Activated B cell treated with CpG ODN at 0.5 μM for 24 hours (primary cell): ENCODE measurements at regions of chr12 and their contacts with region 1.

Region 1: DNA sequence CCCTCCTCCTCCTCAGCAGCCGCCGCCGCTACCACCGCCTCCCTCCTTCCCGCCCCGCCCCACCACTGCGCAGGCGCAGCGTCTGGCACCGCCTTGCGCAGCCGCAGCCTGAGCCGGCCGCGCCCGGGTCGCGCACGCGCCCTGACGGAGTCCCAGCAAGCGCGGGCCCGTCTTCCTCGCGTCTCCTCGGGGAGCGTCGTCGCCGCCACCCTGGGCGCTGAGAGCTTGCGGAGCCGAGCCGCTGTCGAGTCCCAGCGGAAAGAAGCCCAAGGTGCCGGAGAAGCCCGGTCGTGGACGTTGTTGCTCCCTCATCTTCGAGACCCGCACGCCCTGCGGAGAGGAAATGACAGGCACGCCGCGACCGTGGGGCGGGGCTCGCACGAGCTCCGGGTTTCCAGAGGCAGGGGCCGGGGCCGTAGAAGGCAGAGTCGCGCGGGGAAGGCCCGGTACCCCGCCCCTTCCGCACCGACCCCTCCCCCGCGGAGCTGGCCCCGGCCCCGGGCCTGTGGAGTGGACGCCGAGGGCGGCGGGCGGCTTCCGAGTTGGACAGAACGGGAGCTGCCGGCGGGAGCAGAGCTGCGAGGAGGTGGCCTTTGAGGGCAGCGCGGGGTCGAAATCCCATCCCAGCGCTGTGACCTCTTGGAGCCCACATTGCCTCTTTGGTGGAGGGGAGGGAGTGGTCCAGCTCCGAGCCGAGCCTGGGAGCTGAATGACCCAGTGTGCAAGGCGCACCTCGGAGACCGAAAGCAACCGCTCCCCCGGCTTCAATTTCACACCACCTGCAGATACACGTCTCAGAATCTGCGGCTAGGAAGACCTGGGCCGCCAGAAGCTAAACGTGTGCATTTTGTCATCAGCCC is 469 bp upstream of the RAB35 start:
- DNase-seq: peak; percentile 99
- ATAC-seq: peak; percentile 76
- H3K4me3 Mint-ChIP-seq: peak overlapping the region; percentile 78
- H3K27ac Mint-ChIP-seq: peak overlapping the region; percentile 83
- H3K4me1 Mint-ChIP-seq: peaks cover 76% of the 10 kb centered on the region
- H3K27me3 Mint-ChIP-seq: no peaks in the 10 kb centered on the region
- CTCF ChIP-seq: no peak

Region 2: DNA sequence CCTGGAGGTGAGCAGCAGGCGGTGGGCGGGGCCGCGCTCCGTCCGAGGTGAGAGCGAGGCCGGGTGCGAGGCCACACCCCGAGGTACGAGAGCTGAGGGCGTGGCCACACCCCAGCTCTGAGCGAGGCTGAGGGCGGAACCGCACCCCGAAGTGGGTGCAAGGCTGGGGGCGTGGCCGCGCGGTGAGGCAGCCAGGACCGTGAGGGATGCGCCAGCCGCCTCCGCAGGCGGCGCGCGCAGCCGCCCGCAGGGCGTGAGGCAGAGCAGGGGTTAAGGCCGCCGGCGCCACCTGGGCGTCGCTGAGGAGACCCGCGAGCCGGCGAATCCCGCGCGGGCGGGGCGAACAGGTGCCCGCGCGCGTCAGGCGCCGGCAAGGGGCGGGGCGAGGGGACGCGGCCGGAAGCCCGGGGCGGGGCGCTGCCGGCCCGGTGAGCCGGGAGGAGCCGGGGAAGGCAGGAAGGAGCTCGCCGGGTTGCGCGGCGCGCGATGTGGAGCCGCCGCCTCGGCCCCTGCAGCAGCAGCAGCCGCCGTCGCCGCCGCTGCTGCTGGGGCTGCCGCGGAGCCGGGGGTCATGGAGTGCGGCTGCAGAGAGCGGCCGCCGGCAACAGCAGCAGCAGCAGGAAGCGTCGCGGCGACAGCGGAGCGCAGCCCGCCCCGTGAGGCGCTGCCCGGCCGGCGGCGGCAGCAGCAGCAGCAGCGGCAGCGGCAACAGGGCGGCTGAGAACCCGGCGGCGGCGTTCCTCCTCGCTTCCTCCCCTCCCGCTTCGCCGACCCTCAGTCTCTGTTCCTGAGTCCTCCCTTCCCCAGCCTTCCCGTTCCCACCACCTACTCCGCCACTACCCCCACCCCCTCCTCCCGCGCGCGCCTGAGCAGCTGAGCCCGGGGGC is 128.0 kb before region 1 on chr12 and contains the start of gene BICDL1:
- CTCF ChIA-PET with region 1: no interaction called
- POLR2A ChIA-PET with region 1: interaction called, 14 read pairs
- intact Hi-C with region 1: no loop called
- DNase-seq: peak; percentile 96
- ATAC-seq: peak; percentile 83
- H3K4me3 Mint-ChIP-seq: peak within 1 kb of the TSS; percentile 83
- H3K27ac Mint-ChIP-seq: peak within 1 kb of the TSS; percentile 85
- H3K4me1 Mint-ChIP-seq: peaks cover 23% of the 10 kb centered on the region
- H3K27me3 Mint-ChIP-seq: no peaks in the 10 kb centered on the region
- CTCF ChIP-seq: no peak
- total RNA-seq, gene BICDL1: 15.1 and 16.8 TPM in 2 replicates

Region 3: GRCh38 chr12:120132863-120133385 is 15.9 kb after region 1 on chr12:
- CTCF ChIA-PET with region 1: interaction called, 6 read pairs
- POLR2A ChIA-PET with region 1: interaction called, 21 read pairs
- intact Hi-C with region 1: loop called (anchors 1 kb)
- DNase-seq: peak; percentile 22
- ATAC-seq: peak; percentile 81
- H3K4me3 Mint-ChIP-seq: peak overlapping the region; percentile 33
- H3K27ac Mint-ChIP-seq: peak overlapping the region; percentile 80
- H3K4me1 Mint-ChIP-seq: peaks cover 28% of the 10 kb centered on the region
- H3K27me3 Mint-ChIP-seq: no peaks in the 10 kb centered on the region
- CTCF ChIP-seq: no peak

Region 4: GRCh38 chr12:120194534-120195395 is 77.7 kb after region 1 on chr12 and contains the start of gene GCN1:
- CTCF ChIA-PET with region 1: no interaction called
- POLR2A ChIA-PET with region 1: interaction called, 91 read pairs
- intact Hi-C with region 1: no loop called
- DNase-seq: peak; percentile 97
- ATAC-seq: peak; percentile 94
- H3K4me3 Mint-ChIP-seq: peak within 1 kb of the TSS; percentile 83
- H3K27ac Mint-ChIP-seq: peak within 1 kb of the TSS; percentile 86
- H3K4me1 Mint-ChIP-seq: peaks cover 51% of the 10 kb centered on the region
- H3K27me3 Mint-ChIP-seq: no peaks in the 10 kb centered on the region
- CTCF ChIP-seq: no peak
- total RNA-seq, gene GCN1: 116 and 155 TPM in 2 replicates